Heart left ventricle (tissue), 16 donors: ENCODE measurements at regions of chr20 and their contacts with region 1.

Region 1: GRCh38 chr20:43761386-43762340 is 34.9 kb upstream of the GTSF1L start:
- DNase-seq: no peak
- ATAC-seq: peak in 2 of 4 donors; percentile 33 to 56
- H3K4me3 ChIP-seq: no peak overlapping the region
- H3K27ac ChIP-seq: no peak overlapping the region
- H3K4me1 ChIP-seq: peaks cover 0 to 8% (median 0%) of the 10 kb centered on the region in 12 donors
- H3K27me3 ChIP-seq: peaks cover 0 to 13% (median 0%) of the 10 kb centered on the region in 9 donors
- CTCF ChIP-seq: no peak
- POLR2A ChIP-seq: no peak

Region 2: DNA sequence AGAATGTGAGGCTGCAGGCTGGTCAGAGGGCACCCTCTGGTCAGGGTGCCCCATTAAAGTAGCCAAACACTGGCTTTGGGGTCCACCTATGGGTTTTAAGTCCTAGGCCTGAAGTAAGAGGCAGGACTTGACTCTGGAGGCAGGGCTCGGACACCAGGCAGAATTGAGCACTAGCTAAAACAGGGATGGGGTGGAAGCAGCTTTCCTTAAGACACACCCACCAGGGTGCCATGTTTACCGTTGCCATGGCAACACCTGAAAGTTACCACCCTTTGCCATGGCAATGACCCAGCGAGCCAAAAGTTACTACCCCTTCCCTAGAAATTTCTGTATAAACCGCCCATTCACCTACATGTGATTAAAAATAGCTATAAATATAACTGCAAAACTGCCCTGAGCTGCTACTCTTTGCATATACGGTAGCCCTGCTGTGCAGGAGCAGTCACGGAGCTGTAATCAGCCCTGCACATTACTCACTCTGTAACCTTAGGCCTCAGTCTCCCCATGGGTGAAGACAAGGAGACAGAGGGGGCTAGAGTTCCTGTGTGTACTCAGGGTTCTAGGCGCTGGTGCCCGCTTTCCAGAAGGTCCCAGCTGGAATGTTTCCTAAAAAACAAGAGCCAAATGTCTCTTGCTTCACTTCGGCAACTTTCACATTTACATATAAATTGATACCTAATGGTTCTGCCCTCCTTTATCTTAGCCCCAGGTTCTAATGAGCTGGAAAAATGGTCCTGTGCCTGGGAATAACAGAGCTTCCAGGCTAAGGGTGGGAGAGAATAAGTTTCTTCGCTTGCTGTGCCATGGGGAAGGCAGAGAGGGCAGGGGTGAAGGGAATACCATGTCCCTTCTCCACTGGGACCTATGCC is 331.2 kb before region 1 on chr20:
- intact Hi-C with region 1: no loop called
- DNase-seq: no peak
- ATAC-seq: no peak
- H3K4me3 ChIP-seq: no peak overlapping the region
- H3K27ac ChIP-seq: no peak overlapping the region
- H3K4me1 ChIP-seq: no peaks in the 10 kb centered on the region
- H3K27me3 ChIP-seq: peaks cover 0 to 8% (median 0%) of the 10 kb centered on the region in 9 donors
- CTCF ChIP-seq: no peak
- POLR2A ChIP-seq: no peak

Region 3: GRCh38 chr20:43472671-43473380 is 288.8 kb before region 1 on chr20:
- intact Hi-C with region 1: no loop called
- DNase-seq: no peak
- ATAC-seq: no peak
- H3K4me3 ChIP-seq: no peak overlapping the region
- H3K27ac ChIP-seq: no peak overlapping the region
- H3K4me1 ChIP-seq: no peaks in the 10 kb centered on the region
- H3K27me3 ChIP-seq: no peaks in the 10 kb centered on the region
- CTCF ChIP-seq: no peak
- POLR2A ChIP-seq: no peak

Region 4: GRCh38 chr20:44069203-44070011 is 307.7 kb after region 1 on chr20:
- intact Hi-C with region 1: loop called in 1 of 10 experiments (anchors 5 kb)
- DNase-seq: peak in 1 of 5 donors; percentile 28
- ATAC-seq: peak in 1 of 4 donors; percentile 11
- H3K4me3 ChIP-seq: peak overlapping the region in 1 of 12 donors; percentile 34
- H3K27ac ChIP-seq: peak overlapping the region in 1 of 12 donors; percentile 76
- H3K4me1 ChIP-seq: peaks cover 0 to 32% (median 0%) of the 10 kb centered on the region in 12 donors
- H3K27me3 ChIP-seq: peaks cover 0 to 7% (median 0%) of the 10 kb centered on the region in 9 donors
- CTCF ChIP-seq: no peak
- POLR2A ChIP-seq: no peak